Transverse colon (tissue), 4 donors: ENCODE measurements at regions of chr9 and their contacts with region 1.

Region 1: DNA sequence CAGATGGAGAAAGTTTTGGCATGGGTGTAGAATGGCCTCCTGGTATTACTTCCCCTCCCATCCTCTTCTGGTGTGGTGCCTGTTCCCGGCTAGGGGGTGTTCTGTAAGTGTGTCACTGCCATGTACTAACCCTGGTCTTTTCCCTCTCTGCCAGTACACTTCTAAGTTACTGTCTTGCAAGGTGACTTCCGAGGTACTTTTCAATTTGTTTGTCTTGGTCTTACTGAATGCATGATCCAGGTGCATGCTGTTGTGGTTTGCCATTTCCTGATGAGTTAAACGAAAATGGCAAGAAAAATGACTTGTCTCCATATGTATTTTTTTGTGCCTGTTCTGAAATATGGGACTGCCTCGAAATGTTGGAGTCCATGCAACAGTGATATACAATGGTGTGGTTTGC is 46.0 kb downstream of the C9orf152 start:
- DNase-seq: no peak
- H3K4me3 ChIP-seq: no peak overlapping the region
- H3K27ac ChIP-seq: no peak overlapping the region
- H3K4me1 ChIP-seq: peaks cover 2 to 18% (median 13%) of the 10 kb centered on the region in 4 donors
- H3K27me3 ChIP-seq: no peaks in the 10 kb centered on the region
- CTCF ChIP-seq: no peak
- EP300 ChIP-seq: no peak
- POLR2A ChIP-seq: no peak

Region 2: DNA sequence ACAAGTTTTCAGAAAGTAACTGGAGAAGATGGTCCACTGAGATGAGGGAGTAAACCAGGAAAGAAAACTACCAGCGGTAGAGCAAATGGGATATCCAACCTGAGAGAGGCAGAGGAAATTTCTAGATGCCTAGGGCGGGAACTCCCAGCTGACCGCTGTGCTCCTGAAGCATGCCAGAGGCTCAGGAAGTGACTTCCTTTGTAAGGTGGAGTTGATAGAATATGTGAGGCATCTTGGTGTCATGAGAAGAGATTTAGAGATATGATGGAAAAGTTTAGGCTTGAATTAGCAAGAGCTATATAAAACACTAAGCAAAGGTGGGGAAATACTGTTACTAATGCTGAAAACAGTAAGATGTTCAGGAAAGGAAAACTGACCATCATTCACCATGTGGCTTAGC is 78.1 kb before region 1 on chr9:
- in situ Hi-C with region 1: no loop called
- intact Hi-C with region 1: loop called (anchors 2 kb)
- DNase-seq: no peak
- H3K4me3 ChIP-seq: no peak overlapping the region
- H3K27ac ChIP-seq: no peak overlapping the region
- H3K4me1 ChIP-seq: peaks cover 3 to 14% (median 12%) of the 10 kb centered on the region in 4 donors
- H3K27me3 ChIP-seq: no peaks in the 10 kb centered on the region
- CTCF ChIP-seq: no peak
- EP300 ChIP-seq: no peak
- POLR2A ChIP-seq: no peak